Esophagus squamous epithelium (tissue), 5 donors: ENCODE measurements at regions of chrX and their contacts with region 1.

Region 1: DNA sequence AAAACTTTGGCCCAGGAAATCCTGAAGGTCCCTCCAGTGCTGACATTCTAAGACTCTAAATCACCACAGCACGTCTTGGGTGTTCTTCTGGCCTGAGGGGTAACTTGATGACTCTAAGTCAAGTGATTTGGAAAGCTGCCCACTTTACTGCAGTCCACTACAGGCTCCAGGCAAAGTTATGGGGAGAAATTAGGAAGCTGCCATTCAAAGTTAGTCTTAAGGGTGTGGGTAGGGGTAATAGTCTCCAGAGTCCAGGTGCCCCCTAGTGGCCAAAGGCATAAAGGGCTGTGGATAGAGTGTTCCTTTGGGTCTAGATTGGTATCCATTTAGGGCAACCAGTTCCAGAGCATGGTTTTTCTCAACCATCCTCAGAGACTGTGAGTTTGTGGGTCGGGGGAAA is 38.7 kb upstream of the SLC16A2 start:
- DNase-seq: peak; percentile 1
- H3K4me3 ChIP-seq: no peak overlapping the region
- H3K27ac ChIP-seq: no peak overlapping the region
- H3K4me1 ChIP-seq: no peaks in the 10 kb centered on the region
- H3K27me3 ChIP-seq: no peaks in the 10 kb centered on the region
- CTCF ChIP-seq: peak in 5 of 6 experiments; percentile 59 to 78 (median 65)
- POLR2A ChIP-seq: no peak

Region 2: GRCh38 chrX:74550295-74550802 is 167.7 kb after region 1 on chrX:
- intact Hi-C with region 1: loop called (anchors 10 kb)
- DNase-seq: peak; percentile 18
- H3K4me3 ChIP-seq: peak overlapping the region in 1 of 4 donors; percentile 36
- H3K27ac ChIP-seq: no peak overlapping the region
- H3K4me1 ChIP-seq: no peaks in the 10 kb centered on the region
- H3K27me3 ChIP-seq: no peaks in the 10 kb centered on the region
- CTCF ChIP-seq: peak; percentile 90 to 99 (median 96)
- POLR2A ChIP-seq: no peak

Region 3: DNA sequence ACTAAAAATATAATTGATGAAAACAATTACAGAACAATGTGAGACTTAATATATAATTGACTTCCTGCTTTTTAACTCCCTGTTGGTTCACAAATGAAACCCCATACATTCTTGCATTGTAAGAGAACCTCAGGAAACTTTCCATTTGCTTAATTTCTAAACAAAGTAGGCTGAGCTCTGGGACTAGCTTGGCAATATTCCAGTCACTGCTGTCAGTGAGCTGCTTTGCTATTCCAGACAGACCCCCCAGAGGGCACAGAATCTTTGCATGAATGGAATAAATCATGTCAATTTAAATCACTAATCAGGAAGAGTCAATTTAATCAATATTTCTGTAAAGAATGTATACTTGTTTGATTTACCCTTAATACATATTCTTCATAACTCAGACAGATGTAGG is 432.1 kb after region 1 on chrX:
- intact Hi-C with region 1: no loop called
- DNase-seq: no peak
- H3K4me3 ChIP-seq: no peak overlapping the region
- H3K27ac ChIP-seq: no peak overlapping the region
- H3K4me1 ChIP-seq: no peaks in the 10 kb centered on the region
- H3K27me3 ChIP-seq: no peaks in the 10 kb centered on the region
- CTCF ChIP-seq: no peak
- POLR2A ChIP-seq: no peak